Stomach (tissue), 19 donors: ENCODE measurements at regions of chrX and their contacts with region 1.

Region 1: DNA sequence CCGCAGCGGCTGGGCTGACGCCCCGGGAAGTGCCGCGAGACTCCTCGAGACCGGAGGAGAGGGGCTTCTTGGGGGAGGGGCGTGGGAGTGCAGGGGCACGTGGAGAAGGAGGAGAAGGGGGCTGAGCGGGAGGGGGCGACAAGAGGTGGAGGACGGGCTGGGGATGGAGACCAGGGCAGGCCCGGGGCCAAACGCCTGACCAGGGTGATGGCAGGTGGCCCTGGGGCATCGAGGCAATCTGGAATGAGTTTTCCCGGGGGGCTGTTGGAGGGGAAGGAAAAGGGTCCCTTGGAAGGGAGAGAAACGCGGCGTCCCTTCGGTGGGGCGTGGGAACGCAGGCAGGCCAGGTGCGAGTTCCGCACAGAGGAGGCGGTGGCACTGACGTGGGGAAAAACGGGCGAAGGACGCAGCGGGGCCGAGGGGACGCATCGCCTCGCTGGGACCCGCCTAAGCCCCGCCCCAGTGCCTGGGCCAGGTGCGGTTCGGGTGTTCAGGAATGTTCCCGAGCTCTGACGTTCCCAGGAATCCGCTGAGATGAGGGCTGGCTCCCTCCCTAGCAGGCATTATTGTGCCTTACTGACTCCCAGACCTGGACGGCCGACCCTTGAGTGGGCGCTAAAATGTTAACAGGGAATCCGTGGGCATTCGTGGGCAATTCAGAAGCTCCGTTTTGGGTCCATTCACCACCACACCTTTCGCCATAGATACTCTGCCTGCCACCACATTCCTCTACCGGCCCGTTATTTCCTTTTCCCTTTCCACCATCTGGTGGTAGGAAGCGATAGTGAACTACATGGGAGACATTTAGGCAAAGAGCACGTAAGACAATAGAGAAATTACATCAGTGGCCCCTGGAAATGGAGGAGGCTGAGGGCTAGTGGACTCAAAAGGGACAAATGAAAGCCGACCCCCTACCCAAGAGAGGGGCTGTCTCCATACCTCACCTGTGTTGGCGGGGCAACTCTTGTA is 795 bp upstream of the SH3KBP1 start:
- DNase-seq: peak; percentile 64 to 83
- H3K4me3 ChIP-seq: peak overlapping the region; percentile 58 to 73 (median 67)
- H3K27ac ChIP-seq: peak overlapping the region; percentile 56 to 82 (median 78)
- H3K4me1 ChIP-seq: peaks cover 0 to 22% (median 6%) of the 10 kb centered on the region in 4 donors
- H3K27me3 ChIP-seq: no peaks in the 10 kb centered on the region
- CTCF ChIP-seq: peak in 5 of 7 experiments; percentile 30 to 76 (median 46)
- EP300 ChIP-seq: no peak
- POLR2A ChIP-seq: no peak

Region 2: DNA sequence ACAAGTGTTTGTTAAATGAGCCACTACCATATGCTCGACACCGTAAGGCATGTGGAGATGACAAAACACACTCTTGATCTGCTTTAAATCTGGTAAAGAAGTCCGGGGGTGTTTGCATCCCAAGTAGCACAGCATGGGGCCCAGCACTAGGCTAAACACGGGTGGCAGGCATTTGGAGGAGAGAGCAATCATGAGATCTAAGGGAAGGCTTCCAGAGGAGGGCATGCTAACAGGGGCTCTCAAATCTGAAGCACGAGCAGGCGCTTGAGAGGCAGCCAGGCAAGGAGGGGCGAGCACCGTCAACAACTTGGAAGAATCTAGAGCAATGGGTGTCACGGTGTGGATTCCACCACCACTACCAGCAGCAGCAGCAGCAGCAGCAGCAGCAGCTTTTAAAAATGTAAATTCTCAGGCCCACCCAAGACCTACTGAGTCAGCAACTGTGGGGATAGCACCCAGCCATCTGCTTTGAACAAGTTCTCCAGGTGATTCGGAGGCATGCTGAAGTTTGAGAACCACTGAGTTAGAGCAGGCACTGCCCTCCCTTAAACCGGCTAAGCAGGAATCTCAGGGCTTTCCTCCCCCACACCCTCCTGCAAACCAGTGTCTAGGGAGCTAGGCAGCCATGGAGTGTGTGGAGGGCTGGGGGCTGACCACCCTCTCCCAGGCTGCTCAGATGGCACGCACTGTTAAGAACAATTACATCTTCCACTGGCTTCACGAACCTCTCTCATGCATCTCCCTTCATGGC is 302.7 kb before region 1 on chrX:
- intact Hi-C with region 1: loop called (anchors 10 kb)
- DNase-seq: peak in 1 of 2 donors; percentile 28
- H3K4me3 ChIP-seq: no peak overlapping the region
- H3K27ac ChIP-seq: no peak overlapping the region
- H3K4me1 ChIP-seq: no peaks in the 10 kb centered on the region
- H3K27me3 ChIP-seq: no peaks in the 10 kb centered on the region
- CTCF ChIP-seq: no peak
- EP300 ChIP-seq: no peak
- POLR2A ChIP-seq: no peak

Region 3: DNA sequence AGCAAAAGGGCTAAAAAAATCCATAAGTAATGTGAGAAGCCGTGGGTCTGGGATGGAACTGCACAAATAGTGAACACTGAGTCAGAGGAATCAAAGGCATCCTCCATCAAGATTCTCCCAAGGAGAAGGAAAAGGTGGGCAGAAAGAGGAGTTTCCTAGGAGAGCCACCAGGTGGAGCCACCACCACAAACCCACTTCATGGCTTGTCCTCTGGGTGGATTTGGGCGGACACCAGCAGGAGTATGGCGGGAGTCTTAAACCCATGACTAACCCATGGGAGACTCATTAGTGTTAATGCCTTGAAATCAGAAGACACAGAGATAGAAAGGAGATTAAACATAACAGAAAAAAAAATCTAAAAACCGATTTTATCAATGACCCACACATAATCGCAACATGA is 148.5 kb before region 1 on chrX:
- intact Hi-C with region 1: loop called (anchors 5 kb)
- DNase-seq: peak; percentile 65 to 66
- H3K4me3 ChIP-seq: no peak overlapping the region
- H3K27ac ChIP-seq: no peak overlapping the region
- H3K4me1 ChIP-seq: no peaks in the 10 kb centered on the region
- H3K27me3 ChIP-seq: peaks cover 0 to 4% (median 0%) of the 10 kb centered on the region in 3 donors
- CTCF ChIP-seq: peak in 5 of 7 experiments; percentile 30 to 69 (median 55)
- EP300 ChIP-seq: no peak
- POLR2A ChIP-seq: no peak